CD4-positive, alpha-beta T cell (primary cell): ENCODE measurements at regions of chr11 and their contacts with region 1.

Region 1: DNA sequence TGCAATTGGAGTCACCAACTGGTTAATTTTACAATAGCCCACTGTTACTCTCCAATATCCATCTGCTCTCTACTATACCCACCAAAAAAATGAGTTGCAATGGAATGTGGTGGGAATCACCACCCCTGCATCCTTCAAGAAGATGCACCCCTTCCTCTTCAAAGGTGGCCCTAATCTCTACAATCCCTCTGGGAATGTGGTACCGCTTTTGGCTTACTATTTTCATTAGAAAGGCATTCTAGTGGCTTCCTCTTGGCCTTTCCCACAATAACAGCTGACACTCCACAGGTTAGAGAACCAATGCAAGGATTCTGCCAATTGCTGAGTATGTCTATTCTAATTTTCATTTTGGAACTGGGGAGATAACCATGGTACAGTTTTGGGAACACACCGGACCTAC is 33.2 kb upstream of the CWF19L2 start:
- DNase-seq: no peak
- ATAC-seq: no peak
- H3K4me3 ChIP-seq: no peak overlapping the region
- H3K4me3 Mint-ChIP-seq: no peak overlapping the region
- H3K27ac ChIP-seq: no peak overlapping the region
- H3K27ac Mint-ChIP-seq: no peak overlapping the region
- H3K4me1 ChIP-seq: no peaks in the 10 kb centered on the region
- H3K4me1 Mint-ChIP-seq: no peaks in the 10 kb centered on the region
- H3K27me3 ChIP-seq: no peaks in the 10 kb centered on the region
- H3K27me3 Mint-ChIP-seq: peaks cover 5% of the 10 kb centered on the region
- CTCF ChIP-seq: no peak

Region 2: DNA sequence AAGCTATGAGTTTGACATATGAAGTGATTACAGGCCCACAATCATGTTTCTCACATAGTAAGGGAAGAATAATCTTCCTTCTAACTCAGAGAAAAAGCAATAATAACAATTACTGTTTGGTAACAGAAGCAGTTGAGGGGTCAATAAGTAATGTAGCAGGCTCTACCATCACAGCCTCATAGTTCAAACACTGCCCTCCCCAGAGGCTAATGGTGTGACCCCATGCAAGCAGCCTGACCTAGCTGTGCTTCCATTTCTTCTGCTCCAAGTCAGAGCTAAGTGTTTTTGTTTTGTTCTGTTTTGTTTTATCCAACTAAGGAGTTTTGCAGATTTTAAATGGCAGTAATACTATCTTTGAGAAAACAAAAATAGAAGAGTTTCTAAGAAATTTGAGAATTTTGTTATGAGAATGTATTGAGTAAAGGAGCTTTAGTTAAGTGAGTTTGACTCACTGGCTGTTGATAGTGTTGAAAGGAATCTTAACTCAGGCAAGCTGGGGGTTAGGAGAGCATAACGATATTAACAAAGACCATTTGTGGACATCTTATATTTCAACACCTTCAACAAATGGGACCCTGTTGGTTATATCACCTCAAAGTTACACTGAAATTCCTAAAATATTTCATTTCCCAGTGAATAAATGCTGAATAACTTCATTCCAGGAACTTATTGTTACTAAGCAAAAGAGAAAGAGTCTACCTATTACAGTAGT is 521.0 kb before region 1 on chr11:
- CTCF ChIA-PET with region 1: no interaction called
- POLR2A ChIA-PET with region 1: no interaction called
- intact Hi-C with region 1: no loop called
- DNase-seq: no peak
- ATAC-seq: no peak
- H3K4me3 ChIP-seq: no peak overlapping the region
- H3K4me3 Mint-ChIP-seq: no peak overlapping the region
- H3K27ac ChIP-seq: no peak overlapping the region
- H3K27ac Mint-ChIP-seq: no peak overlapping the region
- H3K4me1 ChIP-seq: no peaks in the 10 kb centered on the region
- H3K4me1 Mint-ChIP-seq: no peaks in the 10 kb centered on the region
- H3K27me3 ChIP-seq: no peaks in the 10 kb centered on the region
- H3K27me3 Mint-ChIP-seq: no peaks in the 10 kb centered on the region
- CTCF ChIP-seq: no peak

Region 3: GRCh38 chr11:107457558-107458271 is 33.1 kb before region 1 on chr11 and contains the start of gene CWF19L2:
- CTCF ChIA-PET with region 1: no interaction called
- POLR2A ChIA-PET with region 1: no interaction called
- intact Hi-C with region 1: no loop called
- DNase-seq: peak; percentile 74 to 97 (median 86)
- ATAC-seq: peak; percentile 92
- H3K4me3 ChIP-seq: peak within 1 kb of the TSS; percentile 92
- H3K4me3 Mint-ChIP-seq: peak within 1 kb of the TSS; percentile 91
- H3K27ac ChIP-seq: peak within 1 kb of the TSS; percentile 73 to 79
- H3K27ac Mint-ChIP-seq: peak within 1 kb of the TSS; percentile 82
- H3K4me1 ChIP-seq: peaks cover 7% of the 10 kb centered on the region
- H3K4me1 Mint-ChIP-seq: peaks cover 37% of the 10 kb centered on the region
- H3K27me3 ChIP-seq: no peaks in the 10 kb centered on the region
- H3K27me3 Mint-ChIP-seq: peaks cover 5% of the 10 kb centered on the region
- CTCF ChIP-seq: no peak
- total RNA-seq, gene CWF19L2: 21.2 to 21.8 TPM

Region 4: DNA sequence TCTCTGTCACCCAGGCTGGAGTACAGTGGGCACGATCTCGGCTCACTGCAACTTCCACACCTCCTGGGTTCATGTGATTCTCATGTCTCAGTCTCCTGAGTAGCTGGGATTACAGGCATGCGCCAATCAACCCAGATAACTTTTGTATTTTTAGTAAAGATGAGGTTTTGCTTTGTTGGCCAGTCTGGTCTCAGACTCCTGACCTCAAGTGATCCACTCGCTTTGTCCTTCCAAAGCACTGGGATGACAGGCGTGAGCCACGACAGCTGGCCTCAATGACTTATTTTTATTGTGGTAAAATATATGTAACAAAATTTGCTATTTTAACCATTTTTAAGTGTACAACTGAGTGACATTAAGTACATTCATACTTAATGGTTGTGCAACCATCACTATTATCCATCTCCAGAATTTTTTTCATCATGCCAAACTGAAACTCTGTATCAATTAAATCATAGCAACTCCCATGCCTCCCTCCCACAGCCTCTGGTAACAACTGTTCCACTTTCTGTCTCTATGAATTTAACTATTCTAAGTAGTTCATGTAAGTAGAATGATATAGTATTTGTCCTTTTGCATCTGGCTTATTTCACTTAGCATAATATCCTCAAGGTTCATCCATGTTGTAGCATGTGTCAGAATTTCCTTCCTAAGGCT is 17.5 kb after region 1 on chr11:
- CTCF ChIA-PET with region 1: no interaction called
- POLR2A ChIA-PET with region 1: no interaction called
- intact Hi-C with region 1: loop called in 1 of 2 experiments (anchors 1 kb)
- DNase-seq: no peak
- ATAC-seq: no peak
- H3K4me3 ChIP-seq: no peak overlapping the region
- H3K4me3 Mint-ChIP-seq: no peak overlapping the region
- H3K27ac ChIP-seq: no peak overlapping the region
- H3K27ac Mint-ChIP-seq: no peak overlapping the region
- H3K4me1 ChIP-seq: no peaks in the 10 kb centered on the region
- H3K4me1 Mint-ChIP-seq: no peaks in the 10 kb centered on the region
- H3K27me3 ChIP-seq: no peaks in the 10 kb centered on the region
- H3K27me3 Mint-ChIP-seq: no peaks in the 10 kb centered on the region
- CTCF ChIP-seq: no peak